Activated CD4-positive, alpha-beta T cell treated with anti-CD3 and anti-CD28 coated beads, Interleukin-2, amount 10 ng/mL, durations not matched to agents 24 days and 14 days (primary cell): ENCODE measurements at regions of chr12 and their contacts with region 1.

Region 1: DNA sequence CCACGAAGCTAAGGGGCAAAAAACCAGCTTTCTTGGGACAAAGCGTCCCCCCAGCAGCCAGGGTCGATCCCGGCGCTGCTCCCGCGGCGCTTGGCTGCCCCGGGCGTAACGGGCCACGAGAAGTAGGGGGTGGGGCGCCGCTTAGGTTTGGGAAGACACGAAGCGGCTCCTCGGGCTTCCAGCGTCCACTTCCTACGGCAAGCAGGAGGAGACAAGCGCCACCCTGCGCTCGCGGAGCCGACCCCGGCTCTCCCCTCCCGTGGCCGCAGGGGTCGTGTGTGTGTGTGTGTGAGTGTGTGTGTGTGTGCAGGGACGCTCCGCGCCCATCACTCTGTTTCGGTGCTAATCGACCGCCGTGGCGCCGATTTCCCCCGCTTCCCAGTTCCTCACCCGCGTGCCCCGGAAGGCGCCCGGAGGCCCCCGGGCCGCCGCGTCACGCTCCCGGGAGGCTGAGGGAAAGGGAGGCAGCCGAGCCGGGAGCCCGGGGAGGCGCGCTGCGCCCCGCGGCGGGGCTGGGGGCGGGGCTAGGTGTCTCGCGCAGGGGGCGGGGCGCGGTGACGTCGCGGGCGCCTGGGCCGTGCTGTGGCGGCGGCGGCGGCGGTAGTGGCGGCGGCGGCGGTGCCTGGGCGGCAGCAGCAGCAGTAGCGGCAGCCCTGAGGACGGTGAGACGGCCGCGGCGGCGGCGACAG is at the start of gene ERC1:
- DNase-seq: peak; percentile 96
- H3K4me3 Mint-ChIP-seq: peak within 1 kb of the TSS; percentile 100
- H3K27ac Mint-ChIP-seq: peak within 1 kb of the TSS; percentile 99
- H3K4me1 Mint-ChIP-seq: peaks cover 36% of the 10 kb centered on the region
- H3K27me3 Mint-ChIP-seq: peaks cover 2% of the 10 kb centered on the region
- total RNA-seq, gene ERC1: 30.8 and 31.6 TPM in 2 replicates

Region 2: GRCh38 chr12:1003600-1004271 is 12.9 kb after region 1 on chr12:
- intact Hi-C with region 1: no loop called
- DNase-seq: no peak
- H3K4me3 Mint-ChIP-seq: no peak overlapping the region
- H3K27ac Mint-ChIP-seq: no peak overlapping the region
- H3K4me1 Mint-ChIP-seq: no peaks in the 10 kb centered on the region
- H3K27me3 Mint-ChIP-seq: no peaks in the 10 kb centered on the region

Region 3: DNA sequence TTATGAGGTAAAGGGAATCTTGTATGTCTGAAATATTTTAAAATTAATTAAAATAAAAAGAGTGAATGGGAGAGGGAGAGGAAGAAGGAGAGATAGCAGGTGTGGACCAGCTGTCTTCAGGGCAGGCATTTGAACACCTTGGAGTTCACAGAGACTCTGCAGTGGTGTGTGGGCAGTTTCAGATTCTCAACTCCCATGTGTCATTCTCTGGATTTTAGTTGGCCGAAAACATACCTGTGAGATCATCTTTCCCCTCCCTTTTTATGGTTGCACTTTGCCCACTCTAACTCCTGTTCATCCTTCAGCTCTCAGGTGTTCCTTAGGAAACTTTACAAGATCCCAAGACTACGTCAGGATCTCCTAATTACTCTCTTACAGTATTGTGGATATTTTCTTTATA is 108.4 kb after region 1 on chr12:
- intact Hi-C with region 1: loop called (anchors 5 kb)
- DNase-seq: peak; percentile 54
- H3K4me3 Mint-ChIP-seq: no peak overlapping the region
- H3K27ac Mint-ChIP-seq: no peak overlapping the region
- H3K4me1 Mint-ChIP-seq: peaks cover 29% of the 10 kb centered on the region
- H3K27me3 Mint-ChIP-seq: no peaks in the 10 kb centered on the region